PC-9 (cell line): ENCODE measurements at regions of chr3 and their contacts with region 1.

Region 1: GRCh38 chr3:192467230-192468140 is 259.9 kb downstream of the FGF12 start:
- DNase-seq: peak; percentile 56 to 63
- H3K4me3 ChIP-seq: no peak overlapping the region
- H3K27ac ChIP-seq: no peak overlapping the region
- H3K4me1 ChIP-seq: no peaks in the 10 kb centered on the region
- H3K27me3 ChIP-seq: no peaks in the 10 kb centered on the region
- CTCF ChIP-seq: peak; percentile 100

Region 2: DNA sequence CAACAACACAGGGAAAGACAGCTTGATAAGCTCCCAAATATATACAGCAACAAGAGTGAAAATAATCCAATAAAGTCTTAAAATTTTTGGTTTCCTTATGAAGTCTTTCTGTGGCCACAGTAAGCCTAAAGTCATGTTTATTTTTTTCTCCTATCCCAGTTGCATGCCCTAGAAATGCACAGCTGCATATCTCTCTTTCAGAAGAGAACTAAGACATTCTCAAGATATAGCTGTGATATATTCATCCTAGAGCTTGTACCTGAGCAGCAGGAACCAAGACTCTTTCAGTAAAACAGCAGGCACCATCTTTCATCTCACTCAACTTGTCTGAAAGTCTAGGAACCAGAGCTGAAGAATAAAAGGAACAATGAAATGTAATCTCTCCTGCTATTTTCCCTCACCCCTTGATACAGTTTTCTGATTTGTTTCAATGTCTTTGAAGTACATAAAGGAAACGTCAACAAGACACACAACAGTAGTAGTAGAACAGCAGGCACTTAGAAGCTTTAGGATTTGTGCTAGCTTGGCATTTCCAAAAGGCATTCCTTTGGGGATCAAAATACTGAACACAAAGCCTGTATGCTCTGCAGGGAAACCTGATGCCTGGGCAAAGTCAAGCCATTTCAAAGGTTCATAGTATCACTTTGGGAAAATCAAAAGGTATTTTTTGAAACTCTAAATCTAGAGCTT is 469.8 kb before region 1 on chr3:
- CTCF ChIA-PET with region 1: no interaction called
- POLR2A ChIA-PET with region 1: no interaction called
- intact Hi-C with region 1: no loop called
- DNase-seq: no peak
- H3K4me3 ChIP-seq: no peak overlapping the region
- H3K27ac ChIP-seq: no peak overlapping the region
- H3K4me1 ChIP-seq: no peaks in the 10 kb centered on the region
- H3K27me3 ChIP-seq: no peaks in the 10 kb centered on the region
- CTCF ChIP-seq: no peak

Region 3: GRCh38 chr3:192802957-192803899 is 335.7 kb after region 1 on chr3:
- CTCF ChIA-PET with region 1: interaction called, 3 read pairs
- POLR2A ChIA-PET with region 1: no interaction called
- intact Hi-C with region 1: loop called (anchors 1 kb)
- DNase-seq: peak in 1 of 2 experiments; percentile 45
- H3K4me3 ChIP-seq: no peak overlapping the region
- H3K27ac ChIP-seq: no peak overlapping the region
- H3K4me1 ChIP-seq: no peaks in the 10 kb centered on the region
- H3K27me3 ChIP-seq: no peaks in the 10 kb centered on the region
- CTCF ChIP-seq: peak; percentile 88